Vagina (tissue), 2 donors: ENCODE measurements at regions of chr4 and their contacts with region 1.

Region 1: DNA sequence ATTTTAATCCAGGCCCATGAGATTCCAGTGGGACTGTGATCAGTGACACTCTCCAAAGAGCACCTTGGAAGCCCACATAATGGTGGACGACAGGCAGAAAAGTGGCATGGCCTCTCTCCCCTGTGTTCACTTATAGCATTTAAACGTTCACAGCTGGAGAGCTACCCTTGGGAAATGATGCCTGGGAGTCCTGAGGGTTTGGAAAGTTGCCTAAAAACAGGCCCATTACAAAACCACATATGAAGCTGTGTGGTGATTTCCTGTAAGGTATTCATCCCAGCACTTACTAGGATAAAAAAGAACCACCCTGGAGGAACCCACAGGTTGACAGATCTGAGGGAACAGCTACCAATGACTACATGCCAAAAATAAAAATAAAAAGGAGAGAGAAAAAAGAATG is 193.2 kb downstream of the RASL11B start:
- DNase-seq: no peak
- H3K4me3 ChIP-seq: no peak overlapping the region
- H3K27ac ChIP-seq: no peak overlapping the region
- H3K4me1 ChIP-seq: no peaks in the 10 kb centered on the region
- H3K27me3 ChIP-seq: no peaks in the 10 kb centered on the region
- CTCF ChIP-seq: no peak
- POLR2A ChIP-seq: no peak

Region 2: GRCh38 chr4:52010986-52011385 is 1044.3 kb before region 1 on chr4:
- intact Hi-C with region 1: no loop called
- DNase-seq: no peak
- H3K4me3 ChIP-seq: no peak overlapping the region
- H3K27ac ChIP-seq: no peak overlapping the region
- H3K4me1 ChIP-seq: no peaks in the 10 kb centered on the region
- H3K27me3 ChIP-seq: no peaks in the 10 kb centered on the region
- CTCF ChIP-seq: no peak
- POLR2A ChIP-seq: no peak

Region 3: GRCh38 chr4:52939739-52940138 is 115.5 kb before region 1 on chr4:
- intact Hi-C with region 1: no loop called
- DNase-seq: no peak
- H3K4me3 ChIP-seq: no peak overlapping the region
- H3K27ac ChIP-seq: no peak overlapping the region
- H3K4me1 ChIP-seq: no peaks in the 10 kb centered on the region
- H3K27me3 ChIP-seq: no peaks in the 10 kb centered on the region
- CTCF ChIP-seq: no peak
- POLR2A ChIP-seq: no peak

Region 4: GRCh38 chr4:53541577-53542206 is 486.4 kb after region 1 on chr4:
- intact Hi-C with region 1: loop called (anchors 5 kb)
- DNase-seq: no peak
- H3K4me3 ChIP-seq: no peak overlapping the region
- H3K27ac ChIP-seq: peak overlapping the region; percentile 71
- H3K4me1 ChIP-seq: peaks cover 44% of the 10 kb centered on the region
- H3K27me3 ChIP-seq: no peaks in the 10 kb centered on the region
- CTCF ChIP-seq: no peak
- POLR2A ChIP-seq: no peak